ENCODE measurements at regions of chr22 and their contacts with region 1.

Region 1: GRCh38 chr22:31313366-31314147 is 21.3 kb upstream of the PIK3IP1 start:
- DNase-seq: peak; percentile 58 to 68 (median 60)
- H3K4me3 ChIP-seq: no peak overlapping the region
- H3K4me3 Mint-ChIP-seq: peak overlapping the region in 1 of 8 donors; percentile 10
- H3K27ac ChIP-seq: no peak overlapping the region
- H3K27ac Mint-ChIP-seq: peak overlapping the region in 5 of 7 donors; percentile 37 to 91 (median 78)
- H3K4me1 ChIP-seq: peaks cover 25% of the 10 kb centered on the region
- H3K4me1 Mint-ChIP-seq: peaks cover 6 to 20% (median 14%) of the 10 kb centered on the region in 4 donors
- H3K27me3 ChIP-seq: no peaks in the 10 kb centered on the region
- H3K27me3 Mint-ChIP-seq: no peaks in the 10 kb centered on the region

Region 2: DNA sequence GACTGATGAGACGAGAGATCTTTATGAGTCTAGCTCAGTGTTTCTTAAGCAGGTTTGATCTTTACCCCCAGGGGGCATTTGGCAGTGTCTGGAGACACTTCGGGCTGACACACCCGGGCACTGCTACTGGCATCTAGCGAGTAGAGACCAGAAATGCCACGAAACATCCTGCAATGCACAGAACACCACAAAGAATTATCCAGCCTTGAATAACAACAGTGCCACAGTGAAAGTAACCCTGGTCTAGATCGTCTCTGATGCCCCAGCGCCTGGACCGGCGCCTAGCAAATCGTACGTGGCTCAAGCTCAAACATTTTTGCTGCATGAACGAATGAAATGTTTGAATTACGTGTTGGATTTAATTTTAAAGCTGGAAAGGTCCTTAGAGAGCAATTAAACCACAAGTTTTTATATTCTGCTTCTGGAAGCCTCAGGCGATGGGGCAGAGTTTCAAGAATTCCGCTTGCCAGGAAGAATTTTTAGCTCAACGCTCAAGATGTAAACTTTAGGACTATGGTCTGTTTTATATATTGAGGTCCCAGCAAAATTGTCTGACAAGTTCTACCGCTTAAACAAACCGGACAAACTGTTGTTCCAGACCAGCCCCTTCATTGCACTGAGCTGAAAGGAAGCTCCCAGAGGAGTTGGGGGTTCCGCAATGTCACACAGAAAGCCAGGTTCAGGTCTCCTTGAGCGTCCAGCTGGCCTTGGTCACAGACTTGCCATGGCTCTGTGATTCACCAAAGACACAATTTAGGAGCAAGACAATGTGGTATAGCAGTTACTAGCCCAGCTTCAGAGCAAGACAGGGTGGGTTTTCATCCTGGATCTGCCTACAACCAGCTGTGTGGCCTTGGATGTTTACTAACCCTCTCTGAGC is 276.6 kb before region 1 on chr22:
- CTCF ChIA-PET with region 1: no interaction called
- POLR2A ChIA-PET with region 1: no interaction called
- intact Hi-C with region 1: no loop called
- DNase-seq: no peak
- H3K4me3 ChIP-seq: no peak overlapping the region
- H3K4me3 Mint-ChIP-seq: no peak overlapping the region
- H3K27ac ChIP-seq: no peak overlapping the region
- H3K27ac Mint-ChIP-seq: no peak overlapping the region
- H3K4me1 ChIP-seq: no peaks in the 10 kb centered on the region
- H3K4me1 Mint-ChIP-seq: no peaks in the 10 kb centered on the region
- H3K27me3 ChIP-seq: no peaks in the 10 kb centered on the region
- H3K27me3 Mint-ChIP-seq: no peaks in the 10 kb centered on the region

Region 3: GRCh38 chr22:31295831-31296657 is 17.5 kb before region 1 on chr22:
- CTCF ChIA-PET with region 1: interaction called, 101 read pairs
- POLR2A ChIA-PET with region 1: interaction called, 306 read pairs
- intact Hi-C with region 1: loop called (anchors 1 kb)
- DNase-seq: no peak
- H3K4me3 ChIP-seq: peak overlapping the region; percentile 2 to 29
- H3K4me3 Mint-ChIP-seq: peak overlapping the region; percentile 19 to 86 (median 72)
- H3K27ac ChIP-seq: peak overlapping the region; percentile 7
- H3K27ac Mint-ChIP-seq: peak overlapping the region; percentile 70 to 89 (median 88)
- H3K4me1 ChIP-seq: peaks cover 49% of the 10 kb centered on the region
- H3K4me1 Mint-ChIP-seq: peaks cover 41 to 64% (median 51%) of the 10 kb centered on the region in 4 donors
- H3K27me3 ChIP-seq: no peaks in the 10 kb centered on the region
- H3K27me3 Mint-ChIP-seq: no peaks in the 10 kb centered on the region

Region 4: GRCh38 chr22:31302006-31302405 is 11.6 kb before region 1 on chr22:
- CTCF ChIA-PET with region 1: interaction called, 76 read pairs
- POLR2A ChIA-PET with region 1: interaction called, 306 read pairs
- intact Hi-C with region 1: no loop called
- DNase-seq: no peak
- H3K4me3 ChIP-seq: no peak overlapping the region
- H3K4me3 Mint-ChIP-seq: no peak overlapping the region
- H3K27ac ChIP-seq: no peak overlapping the region
- H3K27ac Mint-ChIP-seq: no peak overlapping the region
- H3K4me1 ChIP-seq: peaks cover 26% of the 10 kb centered on the region
- H3K4me1 Mint-ChIP-seq: peaks cover 30 to 52% (median 42%) of the 10 kb centered on the region in 4 donors
- H3K27me3 ChIP-seq: no peaks in the 10 kb centered on the region
- H3K27me3 Mint-ChIP-seq: no peaks in the 10 kb centered on the region

Region 5: GRCh38 chr22:31818481-31819392 is 505.2 kb after region 1 on chr22:
- CTCF ChIA-PET with region 1: no interaction called
- POLR2A ChIA-PET with region 1: no interaction called
- intact Hi-C with region 1: no loop called
- DNase-seq: no peak
- H3K4me3 ChIP-seq: no peak overlapping the region
- H3K4me3 Mint-ChIP-seq: no peak overlapping the region
- H3K27ac ChIP-seq: no peak overlapping the region
- H3K27ac Mint-ChIP-seq: no peak overlapping the region
- H3K4me1 ChIP-seq: no peaks in the 10 kb centered on the region
- H3K4me1 Mint-ChIP-seq: no peaks in the 10 kb centered on the region
- H3K27me3 ChIP-seq: no peaks in the 10 kb centered on the region
- H3K27me3 Mint-ChIP-seq: no peaks in the 10 kb centered on the region